Activated CD4-positive, alpha-beta memory T cell treated with anti-CD3 and anti-CD28 coated beads for 36 hours (primary cell): ENCODE measurements at regions of chr9 and their contacts with region 1.

Region 1: DNA sequence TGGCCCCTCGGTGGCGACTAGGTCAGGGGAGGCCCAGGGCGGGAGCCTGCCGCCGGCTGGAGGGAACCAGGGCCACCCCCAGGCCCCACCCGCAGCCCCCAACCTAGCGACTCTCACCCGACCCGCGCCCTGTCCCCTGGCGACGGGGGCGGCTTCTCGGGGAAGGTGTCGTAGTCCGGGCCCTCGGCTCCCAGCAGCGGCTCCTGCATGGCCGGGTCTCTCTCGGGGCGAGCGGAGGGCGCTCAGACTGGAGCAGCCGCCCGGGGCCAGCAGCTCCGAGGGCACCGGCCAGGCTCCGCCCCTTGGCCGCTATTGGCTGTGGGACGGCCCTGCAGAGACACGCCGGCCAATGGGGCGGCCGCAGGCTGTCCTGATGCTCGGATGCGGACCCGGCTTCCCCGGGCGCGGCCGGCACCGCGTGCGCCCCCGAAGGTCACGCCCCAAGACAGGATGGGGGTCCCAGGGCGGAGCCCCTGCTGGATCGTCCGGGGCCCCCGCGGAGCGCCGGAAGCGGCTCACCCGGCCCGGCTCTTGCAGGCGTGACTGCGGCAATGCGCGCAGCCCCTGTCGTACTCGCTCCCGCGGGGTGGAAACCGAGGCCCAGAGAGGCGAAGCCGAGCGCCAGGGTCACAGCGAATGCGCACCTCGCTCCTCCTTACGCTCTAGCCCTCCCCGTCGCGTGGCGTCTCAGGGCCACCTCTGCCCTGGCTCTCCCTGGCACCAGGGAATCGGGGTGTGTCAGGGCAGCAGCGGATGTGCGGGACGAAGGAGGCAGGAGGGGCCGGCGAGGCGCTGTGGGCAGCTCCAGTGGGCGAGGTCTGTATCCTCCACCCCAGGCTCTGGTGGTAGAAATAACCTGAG is at the start of gene SLC2A6:
- DNase-seq: peak; percentile 86
- H3K4me3 Mint-ChIP-seq: peak within 1 kb of the TSS; percentile 61
- H3K27ac Mint-ChIP-seq: no peak within 1 kb of the TSS
- H3K4me1 Mint-ChIP-seq: peaks cover 5% of the 10 kb centered on the region
- H3K27me3 Mint-ChIP-seq: no peaks in the 10 kb centered on the region
- total RNA-seq, gene SLC2A6: 2.2 to 2.6 TPM

Region 2: GRCh38 chr9:133459476-133460404 is 19.3 kb before region 1 on chr9 and contains the start of gene CACFD1:
- CTCF ChIA-PET with region 1: interaction called, 4 read pairs
- POLR2A ChIA-PET with region 1: no interaction called
- intact Hi-C with region 1: loop called (anchors 1 kb)
- DNase-seq: peak; percentile 94
- H3K4me3 Mint-ChIP-seq: peak within 1 kb of the TSS; percentile 82
- H3K27ac Mint-ChIP-seq: peak within 1 kb of the TSS; percentile 62
- H3K4me1 Mint-ChIP-seq: peaks cover 7% of the 10 kb centered on the region
- H3K27me3 Mint-ChIP-seq: no peaks in the 10 kb centered on the region
- total RNA-seq, gene CACFD1: 1.1 to 1.2 TPM